Keratinocyte (primary cell): ENCODE measurements at regions of chr7 and their contacts with region 1.

Region 1: GRCh38 chr7:47991741-47992311 is 12.4 kb upstream of the HUS1 start:
- DNase-seq: no peak
- H3K4me3 ChIP-seq: peak overlapping the region; percentile 28 to 74 (median 70)
- H3K27ac ChIP-seq: peak overlapping the region; percentile 33
- H3K4me1 ChIP-seq: peaks cover 10% of the 10 kb centered on the region
- H3K27me3 ChIP-seq: no peaks in the 10 kb centered on the region
- CTCF ChIP-seq: peak; percentile 58 to 87 (median 83)

Region 2: DNA sequence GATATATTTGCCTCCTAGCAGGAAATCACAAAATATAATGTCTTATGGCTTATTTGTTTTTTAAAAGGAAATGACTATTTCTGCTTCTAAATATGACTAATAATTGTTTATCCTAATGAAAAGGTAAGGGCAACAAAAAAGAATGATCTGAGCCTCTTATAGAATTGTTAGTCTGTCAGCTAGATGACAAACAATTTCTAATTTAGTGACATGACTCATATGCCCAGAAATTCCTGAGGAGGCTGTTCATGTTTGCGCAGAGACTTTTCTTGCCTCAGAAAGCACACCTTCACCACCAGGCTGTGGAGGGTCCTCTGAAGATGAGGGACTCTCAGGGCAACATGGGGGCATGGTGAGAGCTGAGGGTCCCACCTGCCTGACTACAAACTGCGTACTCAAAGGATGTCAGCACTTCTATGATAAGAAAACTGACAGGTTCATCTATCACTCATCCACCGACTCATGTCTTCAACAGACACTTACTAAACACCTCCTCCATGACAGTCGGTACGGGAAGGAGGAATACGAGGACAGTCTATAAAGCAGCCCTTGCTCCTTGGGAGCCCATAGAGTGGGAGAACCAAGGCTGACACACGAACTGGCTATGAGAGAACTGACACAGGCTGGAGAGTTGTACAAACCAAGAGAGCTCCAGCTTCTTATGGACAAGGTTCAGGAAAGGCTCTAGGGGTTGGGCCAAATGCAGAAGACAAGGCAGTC is 145.5 kb before region 1 on chr7:
- dilution Hi-C with region 1: no loop called
- DNase-seq: no peak
- H3K4me3 ChIP-seq: no peak overlapping the region
- H3K27ac ChIP-seq: no peak overlapping the region
- H3K4me1 ChIP-seq: peaks cover 11% of the 10 kb centered on the region
- H3K27me3 ChIP-seq: peaks cover 16% of the 10 kb centered on the region
- CTCF ChIP-seq: no peak

Region 3: DNA sequence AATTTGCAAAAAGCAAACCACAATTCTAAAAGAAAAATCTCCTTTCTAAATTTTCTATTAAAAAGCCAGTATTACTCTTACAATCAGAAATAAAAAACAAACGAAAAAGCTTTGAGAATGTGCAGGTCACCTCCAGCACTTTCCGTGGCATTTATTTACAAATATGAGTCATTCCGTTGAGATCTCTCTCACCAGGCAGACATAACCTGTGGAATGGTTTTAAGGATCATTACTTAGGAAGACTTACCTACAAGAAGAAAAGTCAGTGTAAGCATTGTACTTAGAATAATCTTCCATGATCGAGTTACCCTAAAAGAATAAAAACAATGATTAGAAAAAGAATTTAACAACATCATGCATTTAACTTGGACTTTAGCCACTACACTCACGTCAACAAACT is 33.8 kb after region 1 on chr7:
- dilution Hi-C with region 1: loop called (anchors 5 kb)
- DNase-seq: no peak
- H3K4me3 ChIP-seq: no peak overlapping the region
- H3K27ac ChIP-seq: no peak overlapping the region
- H3K4me1 ChIP-seq: no peaks in the 10 kb centered on the region
- H3K27me3 ChIP-seq: no peaks in the 10 kb centered on the region
- CTCF ChIP-seq: no peak

Region 4: GRCh38 chr7:48109848-48110663 is 118.2 kb after region 1 on chr7:
- dilution Hi-C with region 1: no loop called
- DNase-seq: no peak
- H3K4me3 ChIP-seq: no peak overlapping the region
- H3K27ac ChIP-seq: peak overlapping the region; percentile 8
- H3K4me1 ChIP-seq: peaks cover 14% of the 10 kb centered on the region
- H3K27me3 ChIP-seq: no peaks in the 10 kb centered on the region
- CTCF ChIP-seq: peak; percentile 97 to 99 (median 99)

Region 5: DNA sequence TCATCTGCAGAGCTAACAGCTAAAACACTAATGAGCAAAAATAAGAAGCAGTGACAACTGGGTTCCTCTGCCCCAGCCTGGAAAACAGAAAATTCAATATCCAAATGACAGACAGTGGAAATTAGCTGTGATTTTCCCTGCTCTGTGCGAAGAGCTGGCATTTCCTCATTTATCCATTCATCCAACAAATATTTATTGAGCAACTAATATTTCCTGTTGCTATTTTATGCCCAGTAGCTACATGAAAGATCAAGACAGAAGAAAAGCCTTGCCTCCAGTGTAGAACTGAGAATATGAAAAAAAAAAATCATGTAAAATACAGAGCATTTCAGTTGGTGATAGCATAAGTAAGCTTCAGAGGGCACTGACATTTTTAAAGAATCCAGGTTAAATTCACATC is 320.3 kb after region 1 on chr7:
- dilution Hi-C with region 1: no loop called
- DNase-seq: no peak
- H3K4me3 ChIP-seq: no peak overlapping the region
- H3K27ac ChIP-seq: no peak overlapping the region
- H3K4me1 ChIP-seq: peaks cover 31% of the 10 kb centered on the region
- H3K27me3 ChIP-seq: no peaks in the 10 kb centered on the region
- CTCF ChIP-seq: no peak

Region 6: DNA sequence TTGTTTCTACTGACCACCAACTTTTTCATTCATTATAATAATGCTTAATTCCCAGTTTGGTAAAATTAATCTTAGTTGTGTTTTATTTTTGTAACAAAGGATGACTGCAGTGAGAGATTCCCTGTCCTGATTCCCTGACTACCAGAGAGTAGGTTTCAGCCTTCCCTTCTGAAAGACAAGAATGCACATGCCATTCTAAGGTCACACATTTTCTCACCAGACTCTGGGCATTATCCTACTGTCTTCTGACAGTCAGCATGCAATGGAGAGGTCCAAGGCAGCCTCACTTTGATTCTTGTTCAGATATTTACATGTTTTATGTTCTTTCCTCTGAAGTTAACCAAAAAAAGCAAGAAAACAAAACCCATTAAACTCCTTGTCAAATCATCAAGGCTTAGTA is 559.8 kb after region 1 on chr7:
- dilution Hi-C with region 1: no loop called
- DNase-seq: no peak
- H3K4me3 ChIP-seq: no peak overlapping the region
- H3K27ac ChIP-seq: no peak overlapping the region
- H3K4me1 ChIP-seq: no peaks in the 10 kb centered on the region
- H3K27me3 ChIP-seq: no peaks in the 10 kb centered on the region
- CTCF ChIP-seq: no peak